ENCODE measurements at regions of chr10 and their contacts with region 1.

Region 1: GRCh38 chr10:35613597-35614226 is 8.6 kb downstream of the GJD4 start:
- DNase-seq: peak; percentile 92
- ATAC-seq: peak; percentile 96
- H3K4me3 ChIP-seq: no peak overlapping the region
- H3K27ac ChIP-seq: no peak overlapping the region
- H3K4me1 ChIP-seq: peaks cover 8% of the 10 kb centered on the region
- H3K27me3 ChIP-seq: no peaks in the 10 kb centered on the region
- CTCF ChIP-seq: peak; percentile 100

Region 2: GRCh38 chr10:34918776-34919315 is 694.9 kb before region 1 on chr10:
- CTCF ChIA-PET with region 1: no interaction called
- POLR2A ChIA-PET with region 1: interaction called, 15 read pairs
- intact Hi-C with region 1: no loop called
- DNase-seq: no peak
- ATAC-seq: no peak
- H3K4me3 ChIP-seq: no peak overlapping the region
- H3K27ac ChIP-seq: no peak overlapping the region
- H3K4me1 ChIP-seq: no peaks in the 10 kb centered on the region
- H3K27me3 ChIP-seq: no peaks in the 10 kb centered on the region
- CTCF ChIP-seq: no peak

Region 3: GRCh38 chr10:35563261-35563891 is 50.3 kb before region 1 on chr10:
- CTCF ChIA-PET with region 1: interaction called, 14 read pairs
- POLR2A ChIA-PET with region 1: no interaction called
- intact Hi-C with region 1: no loop called
- DNase-seq: peak; percentile 98
- ATAC-seq: peak; percentile 85
- H3K4me3 ChIP-seq: no peak overlapping the region
- H3K27ac ChIP-seq: no peak overlapping the region
- H3K4me1 ChIP-seq: 0 out of 2 replicates have a peak, but pooled peaks cover 2% of the 10 kb centered on the region
- H3K27me3 ChIP-seq: no peaks in the 10 kb centered on the region
- CTCF ChIP-seq: peak; percentile 100

Region 4: GRCh38 chr10:35574924-35575352 is 38.8 kb before region 1 on chr10:
- CTCF ChIA-PET with region 1: interaction called, 11 read pairs
- POLR2A ChIA-PET with region 1: no interaction called
- intact Hi-C with region 1: no loop called
- DNase-seq: peak; percentile 100
- ATAC-seq: peak; percentile 90
- H3K4me3 ChIP-seq: peak overlapping the region; percentile 0; the same call in 1 of the 2 replicates
- H3K27ac ChIP-seq: peak overlapping the region; percentile 55
- H3K4me1 ChIP-seq: peaks cover 21% of the 10 kb centered on the region
- H3K27me3 ChIP-seq: no peaks in the 10 kb centered on the region
- CTCF ChIP-seq: peak; percentile 98

Region 5: GRCh38 chr10:35626971-35627507 is 13.3 kb after region 1 on chr10:
- CTCF ChIA-PET with region 1: interaction called, 21 read pairs
- POLR2A ChIA-PET with region 1: no interaction called
- intact Hi-C with region 1: no loop called
- DNase-seq: peak; percentile 86
- ATAC-seq: peak; percentile 90
- H3K4me3 ChIP-seq: 0 out of 2 replicates have a peak overlapping the region, but pooled peaks have one; percentile 0
- H3K27ac ChIP-seq: peak overlapping the region; percentile 73
- H3K4me1 ChIP-seq: peaks cover 19% of the 10 kb centered on the region
- H3K27me3 ChIP-seq: no peaks in the 10 kb centered on the region
- CTCF ChIP-seq: no peak

Region 6: GRCh38 chr10:36880898-36881297 is 1267.2 kb after region 1 on chr10:
- CTCF ChIA-PET with region 1: interaction called, 94 read pairs
- POLR2A ChIA-PET with region 1: no interaction called
- intact Hi-C with region 1: loop called (anchors 1 kb)
- DNase-seq: peak; percentile 93
- ATAC-seq: peak; percentile 86
- H3K4me3 ChIP-seq: no peak overlapping the region
- H3K27ac ChIP-seq: no peak overlapping the region
- H3K4me1 ChIP-seq: no peaks in the 10 kb centered on the region
- H3K27me3 ChIP-seq: 0 out of 2 replicates have a peak, but pooled peaks cover 3% of the 10 kb centered on the region
- CTCF ChIP-seq: peak; percentile 86

Region 7: DNA sequence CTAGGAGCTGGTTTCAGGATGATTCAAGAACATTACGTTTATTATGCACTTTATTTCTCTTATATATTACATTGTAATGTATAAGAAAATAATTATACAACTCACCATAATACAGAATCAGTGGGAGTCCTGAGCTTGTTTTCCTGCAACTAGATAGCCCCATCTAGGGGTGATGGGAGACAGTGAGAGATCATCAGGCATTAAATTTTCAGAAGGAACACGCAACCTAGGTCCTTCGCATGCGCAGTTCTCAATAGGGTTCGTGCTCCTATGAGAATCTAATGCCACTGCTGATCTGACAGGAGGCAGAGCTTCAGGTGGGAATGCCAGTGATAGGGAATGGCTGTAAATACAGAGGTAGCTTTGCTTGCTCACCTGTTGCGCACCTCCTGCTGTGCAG is 1649.6 kb after region 1 on chr10:
- CTCF ChIA-PET with region 1: interaction called, 4 read pairs
- POLR2A ChIA-PET with region 1: no interaction called
- intact Hi-C with region 1: loop called (anchors 5 kb)
- DNase-seq: peak; percentile 83
- ATAC-seq: peak; percentile 75
- H3K4me3 ChIP-seq: no peak overlapping the region
- H3K27ac ChIP-seq: no peak overlapping the region
- H3K4me1 ChIP-seq: no peaks in the 10 kb centered on the region; the same call in 1 of the 2 replicates
- H3K27me3 ChIP-seq: peaks cover 5% of the 10 kb centered on the region; the same call in 1 of the 2 replicates
- CTCF ChIP-seq: peak; percentile 95

Measured in PC-3 (cell line).